Activated CD4-positive, alpha-beta T cell treated with anti-CD3 and anti-CD28 coated beads, Interleukin-2, amount 10 ng/mL, durations not matched to agents 24 days and 14 days (primary cell): ENCODE measurements at regions of chr15 and their contacts with region 1.

Region 1: DNA sequence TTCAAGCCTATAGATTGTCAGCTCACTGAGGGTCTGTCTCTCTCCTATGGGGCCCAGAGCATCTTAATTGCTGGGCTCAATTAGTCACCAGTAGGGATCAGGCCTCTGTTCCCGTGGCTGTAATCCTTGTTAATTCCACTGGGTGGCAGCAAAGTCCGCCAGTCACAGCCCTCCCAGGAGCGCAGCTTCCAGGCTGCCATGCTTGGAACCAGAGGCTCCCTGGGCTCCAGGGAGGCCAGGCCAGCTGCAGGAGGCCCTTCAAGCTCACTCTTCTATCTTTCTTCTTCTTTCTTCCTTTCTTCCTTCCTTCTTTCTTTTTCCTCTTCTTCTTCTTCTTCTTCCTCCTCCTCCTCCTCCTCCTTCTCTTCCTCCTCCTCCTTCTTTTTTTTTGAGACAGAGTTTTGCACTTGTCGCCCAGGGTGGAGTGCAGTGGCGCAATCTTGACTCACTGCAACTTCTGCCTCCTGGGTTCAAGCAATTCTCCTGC is 14.4 kb downstream of the RNU5B-1 start:
- DNase-seq: peak; percentile 93
- H3K4me3 Mint-ChIP-seq: no peak overlapping the region
- H3K27ac Mint-ChIP-seq: no peak overlapping the region
- H3K4me1 Mint-ChIP-seq: no peaks in the 10 kb centered on the region
- H3K27me3 Mint-ChIP-seq: peaks cover 19% of the 10 kb centered on the region

Region 2: DNA sequence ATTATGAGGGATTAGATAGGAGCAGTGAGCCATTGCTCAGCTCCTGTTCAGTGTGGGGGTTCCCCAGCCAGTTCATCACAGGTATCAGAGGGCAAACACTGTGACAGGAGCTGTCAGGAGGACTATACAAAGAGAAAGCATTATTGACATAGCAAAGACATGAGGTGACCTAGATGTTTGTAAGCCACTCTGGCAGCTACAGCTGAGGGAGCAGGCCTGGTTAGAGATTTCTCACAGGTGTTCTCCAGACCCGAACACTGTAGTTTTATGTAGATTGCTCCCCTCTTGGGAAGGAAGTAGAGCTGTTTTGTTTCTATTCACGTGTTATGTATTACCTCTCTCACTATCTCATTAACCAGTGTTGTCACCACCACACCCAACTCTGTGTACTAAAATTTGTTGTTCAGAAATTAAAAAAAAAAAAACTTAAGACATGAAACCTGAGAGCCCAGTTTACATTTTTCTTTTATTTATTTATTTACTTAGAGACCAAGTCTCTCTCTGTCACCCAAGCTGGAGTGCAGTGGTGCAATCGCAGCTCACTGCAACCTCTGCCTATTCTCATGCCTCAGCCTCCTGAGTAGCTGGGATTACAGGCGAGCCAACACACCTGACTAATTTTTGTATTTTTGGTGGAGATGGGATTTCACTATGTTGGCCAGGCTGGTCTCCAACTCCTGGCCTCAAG is 667.2 kb before region 1 on chr15:
- intact Hi-C with region 1: no loop called
- DNase-seq: peak; percentile 79
- H3K4me3 Mint-ChIP-seq: peak overlapping the region; percentile 46
- H3K27ac Mint-ChIP-seq: peak overlapping the region; percentile 70
- H3K4me1 Mint-ChIP-seq: peaks cover 25% of the 10 kb centered on the region
- H3K27me3 Mint-ChIP-seq: no peaks in the 10 kb centered on the region

Region 3: DNA sequence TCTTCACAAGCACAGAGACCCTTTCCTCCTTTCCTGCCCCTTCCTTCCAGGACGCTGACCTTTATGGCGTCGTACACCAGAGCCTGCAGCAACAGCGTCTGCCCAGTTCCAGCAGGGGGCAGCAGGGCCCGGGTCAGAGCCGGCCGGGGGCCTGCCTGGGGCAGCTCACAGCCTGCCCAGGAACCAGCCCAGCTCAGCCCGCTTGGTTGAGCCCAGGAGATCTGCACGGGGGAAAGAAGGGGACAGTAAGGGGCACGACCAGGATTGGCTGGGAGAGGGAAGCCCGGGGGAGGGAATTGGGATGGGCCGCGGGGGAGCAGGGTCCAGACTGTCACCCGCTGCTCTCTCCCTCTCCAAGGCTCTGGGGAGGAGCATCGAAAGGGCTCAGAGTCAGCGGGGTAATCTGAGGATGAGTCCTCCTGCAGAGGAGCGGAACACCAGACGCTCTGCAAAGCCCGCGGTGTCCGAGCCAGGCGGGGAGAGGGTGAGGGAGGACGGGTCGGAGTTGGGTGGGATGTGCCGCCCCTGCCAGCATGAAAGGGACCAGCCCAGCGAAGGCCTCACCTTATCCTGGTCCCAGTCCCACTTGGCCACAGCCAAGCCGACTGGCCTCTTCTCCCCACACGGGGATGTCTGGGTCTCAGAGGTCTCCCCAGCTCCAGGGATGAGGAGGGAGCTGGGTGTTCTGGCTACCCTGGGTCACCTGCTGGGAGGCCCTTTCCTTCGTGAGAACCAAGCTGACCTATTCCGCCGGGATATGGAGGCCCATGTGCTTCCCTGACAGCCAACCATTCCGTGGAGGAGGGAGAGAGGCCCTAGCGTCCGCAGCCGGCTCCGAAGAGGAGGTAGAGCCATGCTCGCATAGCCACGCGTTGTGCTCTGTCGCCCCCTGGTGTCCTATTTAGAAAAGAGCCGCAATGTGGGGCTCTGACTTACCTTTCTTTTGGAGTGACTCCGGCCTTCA is 66.3 kb after region 1 on chr15:
- intact Hi-C with region 1: loop called (anchors 1 kb)
- DNase-seq: peak; percentile 95
- H3K4me3 Mint-ChIP-seq: peak overlapping the region; percentile 96
- H3K27ac Mint-ChIP-seq: peak overlapping the region; percentile 92
- H3K4me1 Mint-ChIP-seq: peaks cover 13% of the 10 kb centered on the region
- H3K27me3 Mint-ChIP-seq: peaks cover 34% of the 10 kb centered on the region

Region 4: DNA sequence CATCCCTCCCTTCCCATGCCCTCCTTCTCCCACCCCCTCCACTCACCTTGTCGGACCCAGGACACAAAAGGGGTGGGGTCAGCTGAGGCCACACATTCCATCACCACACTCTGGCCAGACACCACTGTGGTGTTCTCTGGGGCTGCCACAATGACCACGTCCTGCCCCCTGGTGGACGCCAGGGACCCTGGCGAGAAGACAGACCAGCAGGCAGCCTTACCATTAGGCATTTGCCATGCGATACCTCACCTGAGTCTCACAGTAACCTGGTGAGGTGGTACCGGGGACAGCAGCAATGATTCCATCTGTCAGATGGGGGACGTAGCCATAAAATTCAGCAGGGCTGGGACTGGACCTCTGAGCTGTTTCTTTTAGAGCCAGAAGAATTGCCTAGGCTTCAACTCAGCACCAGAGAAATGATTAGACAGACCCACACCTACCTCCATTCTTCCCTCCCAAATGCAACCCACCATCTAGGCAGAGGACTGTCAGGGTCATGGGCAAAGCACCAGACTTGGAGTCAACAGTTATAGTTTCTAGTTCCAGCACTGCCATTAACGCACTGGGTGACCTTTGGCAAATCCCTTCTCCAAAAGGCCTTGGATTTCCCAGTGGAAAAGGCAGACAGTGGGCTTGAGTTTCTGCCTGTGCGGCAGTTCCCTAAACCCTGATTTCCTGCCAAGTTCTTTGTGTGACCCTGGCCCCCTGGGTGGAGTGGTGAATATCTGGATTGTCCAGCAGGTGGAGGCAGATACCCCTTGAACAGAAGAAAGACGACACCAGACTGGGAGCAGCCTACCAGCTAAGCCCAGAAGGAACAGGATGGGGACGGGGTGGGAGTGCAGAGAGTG is 82.1 kb after region 1 on chr15:
- intact Hi-C with region 1: loop called (anchors 5 kb)
- DNase-seq: peak; percentile 83
- H3K4me3 Mint-ChIP-seq: no peak overlapping the region
- H3K27ac Mint-ChIP-seq: no peak overlapping the region
- H3K4me1 Mint-ChIP-seq: peaks cover 8% of the 10 kb centered on the region
- H3K27me3 Mint-ChIP-seq: peaks cover 56% of the 10 kb centered on the region